OCI-LY7 (cell line): ENCODE measurements at regions of chr3 and their contacts with region 1.

Region 1: GRCh38 chr3:193788189-193788991 is 195.4 kb downstream of the OPA1 start:
- DNase-seq: peak; percentile 81
- H3K4me3 ChIP-seq: no peak overlapping the region
- H3K27ac ChIP-seq: no peak overlapping the region
- H3K4me1 ChIP-seq: no peaks in the 10 kb centered on the region
- CTCF ChIP-seq: peak; percentile 92

Region 2: DNA sequence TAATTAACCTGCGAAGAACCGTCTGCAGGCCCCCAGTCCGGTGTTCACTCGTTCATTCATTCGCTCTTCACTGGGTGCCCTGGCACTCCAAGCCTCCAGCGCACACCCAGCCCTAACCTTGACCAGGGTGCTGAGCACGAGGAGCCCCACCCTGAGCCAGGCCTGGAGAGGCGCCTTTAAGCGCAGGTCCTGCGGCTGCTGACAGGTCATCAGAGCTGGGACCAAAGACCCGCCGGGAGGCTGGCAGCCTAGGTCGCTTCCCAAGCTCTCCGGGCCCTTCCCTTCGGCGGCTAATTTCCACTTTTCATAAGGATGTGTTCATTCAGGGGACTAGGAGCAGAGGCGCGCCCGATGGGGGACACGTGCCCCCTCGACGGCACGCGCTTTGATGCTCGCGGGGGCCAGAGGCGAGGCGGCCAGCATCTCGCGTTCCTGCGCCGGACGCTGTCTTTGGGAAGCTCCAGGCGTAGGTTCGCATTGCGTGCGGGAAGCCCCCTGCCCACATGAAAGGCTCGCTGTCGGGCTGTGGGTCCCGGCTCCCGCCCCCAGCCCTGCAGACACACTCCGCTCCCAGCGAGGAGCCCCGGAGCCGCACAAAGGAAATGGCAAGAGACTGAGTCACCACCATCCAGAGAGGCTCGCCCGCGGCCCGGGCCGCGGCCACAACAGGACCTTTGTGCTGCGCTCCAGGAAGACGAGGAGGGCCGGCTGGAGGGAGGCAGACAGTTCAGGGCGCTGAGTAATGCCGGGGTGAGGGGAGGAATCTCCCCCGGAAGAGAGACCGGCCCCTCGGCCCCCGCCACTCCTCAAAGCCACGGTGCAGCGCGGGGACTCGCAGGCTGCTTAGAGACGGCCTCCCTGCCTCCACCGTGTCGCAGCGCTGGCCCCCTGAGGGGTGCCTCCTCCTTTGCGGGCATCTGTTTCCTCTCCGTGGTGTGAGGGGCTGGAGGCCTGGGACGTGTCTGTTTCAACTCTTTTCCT is 81.1 kb after region 1 on chr3:
- CTCF ChIA-PET with region 1: no interaction called
- POLR2A ChIA-PET with region 1: no interaction called
- intact Hi-C with region 1: loop called (anchors 5 kb)
- DNase-seq: no peak
- H3K4me3 ChIP-seq: peak overlapping the region; percentile 59
- H3K27ac ChIP-seq: peak overlapping the region; percentile 89
- H3K4me1 ChIP-seq: peaks cover 73% of the 10 kb centered on the region
- CTCF ChIP-seq: no peak

Region 3: GRCh38 chr3:193971261-193971751 is 182.9 kb after region 1 on chr3:
- CTCF ChIA-PET with region 1: no interaction called
- POLR2A ChIA-PET with region 1: no interaction called
- intact Hi-C with region 1: loop called (anchors 10 kb)
- DNase-seq: no peak
- H3K4me3 ChIP-seq: no peak overlapping the region
- H3K27ac ChIP-seq: no peak overlapping the region
- H3K4me1 ChIP-seq: peaks cover 7% of the 10 kb centered on the region
- CTCF ChIP-seq: no peak

Region 4: GRCh38 chr3:194315088-194315964 is 526.9 kb after region 1 on chr3:
- CTCF ChIA-PET with region 1: no interaction called
- POLR2A ChIA-PET with region 1: no interaction called
- intact Hi-C with region 1: loop called (anchors 2 kb)
- DNase-seq: peak; percentile 66
- H3K4me3 ChIP-seq: no peak overlapping the region
- H3K27ac ChIP-seq: no peak overlapping the region
- H3K4me1 ChIP-seq: no peaks in the 10 kb centered on the region
- CTCF ChIP-seq: peak; percentile 89